Activated CD8-positive, alpha-beta T cell treated with anti-CD3 and anti-CD28 coated beads for 36 hours (primary cell): ENCODE measurements at regions of chr12 and their contacts with region 1.

Region 1: DNA sequence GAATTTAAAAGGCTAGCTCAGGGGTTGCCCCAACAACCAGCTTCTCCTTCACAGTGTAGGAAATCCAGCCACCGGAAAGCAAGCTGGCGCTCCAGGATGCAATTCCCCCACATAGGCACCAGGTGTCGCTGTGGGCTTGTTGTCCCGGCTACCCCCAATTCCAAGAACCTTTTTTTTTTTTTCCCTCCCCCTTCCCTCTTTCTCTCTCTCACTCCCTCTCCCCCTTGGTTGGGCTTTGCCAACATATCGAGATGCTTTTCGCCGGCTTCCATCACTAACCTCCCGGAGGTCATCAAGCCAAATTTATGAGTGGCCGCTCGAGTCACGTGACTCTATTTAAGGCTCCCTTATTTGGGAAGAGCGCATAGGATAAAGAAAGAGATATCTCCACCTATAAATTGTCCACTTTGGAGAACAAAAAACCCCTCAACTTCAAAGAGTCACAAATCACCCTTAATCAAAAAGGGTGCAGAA is at the start of gene HOXC5:
- DNase-seq: peak; percentile 78
- ATAC-seq: peak; percentile 57
- H3K4me3 Mint-ChIP-seq: peak within 1 kb of the TSS; percentile 32
- H3K27ac Mint-ChIP-seq: no peak within 1 kb of the TSS
- H3K4me1 Mint-ChIP-seq: peaks cover 18% of the 10 kb centered on the region
- H3K27me3 Mint-ChIP-seq: peaks cover 66% of the 10 kb centered on the region
- CTCF ChIP-seq: peak; percentile 97
- total RNA-seq, gene HOXC5: not detected

Region 2: GRCh38 chr12:53939141-53940108 is 93.2 kb before region 1 on chr12:
- CTCF ChIA-PET with region 1: no interaction called
- POLR2A ChIA-PET with region 1: no interaction called
- intact Hi-C with region 1: no loop called
- DNase-seq: no peak
- ATAC-seq: no peak
- H3K4me3 Mint-ChIP-seq: no peak overlapping the region
- H3K27ac Mint-ChIP-seq: no peak overlapping the region
- H3K4me1 Mint-ChIP-seq: peaks cover 4% of the 10 kb centered on the region
- H3K27me3 Mint-ChIP-seq: peaks cover 79% of the 10 kb centered on the region
- CTCF ChIP-seq: no peak

Region 3: DNA sequence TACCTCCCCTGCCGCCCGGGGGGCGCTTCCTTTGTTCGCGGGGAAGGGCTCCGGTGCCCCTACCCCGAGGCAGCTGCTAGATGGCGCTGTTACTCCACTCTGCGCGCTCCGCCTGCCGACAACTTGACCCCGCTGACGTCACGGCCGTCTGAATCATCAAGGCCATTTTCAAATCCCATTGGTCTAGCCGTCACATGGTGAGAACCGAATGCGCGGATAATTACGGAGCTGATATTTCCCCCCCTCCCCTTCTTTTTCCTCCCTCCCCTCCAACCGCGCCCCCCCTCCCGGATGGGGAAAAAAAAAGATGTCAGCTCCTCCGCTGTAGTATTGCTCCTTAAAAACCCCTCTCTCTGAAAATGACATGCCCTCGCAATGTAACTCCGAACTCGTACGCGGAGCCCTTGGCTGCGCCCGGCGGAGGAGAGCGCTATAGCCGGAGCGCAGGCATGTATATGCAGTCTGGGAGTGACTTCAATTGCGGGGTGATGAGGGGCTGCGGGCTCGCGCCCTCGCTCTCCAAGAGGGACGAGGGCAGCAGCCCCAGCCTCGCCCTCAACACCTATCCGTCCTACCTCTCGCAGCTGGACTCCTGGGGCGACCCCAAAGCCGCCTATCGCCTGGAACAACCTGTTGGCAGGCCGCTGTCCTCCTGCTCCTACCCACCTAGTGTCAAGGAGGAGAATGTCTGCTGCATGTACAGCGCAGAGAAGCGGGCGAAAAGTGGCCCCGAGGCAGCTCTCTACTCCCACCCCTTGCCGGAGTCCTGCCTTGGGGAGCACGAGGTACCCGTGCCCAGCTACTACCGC is 47.6 kb before region 1 on chr12 and contains the start of gene HOXC10:
- CTCF ChIA-PET with region 1: interaction called, 32 read pairs
- POLR2A ChIA-PET with region 1: no interaction called
- intact Hi-C with region 1: loop called (anchors 5 kb)
- DNase-seq: peak; percentile 97
- ATAC-seq: peak; percentile 83
- H3K4me3 Mint-ChIP-seq: peak within 1 kb of the TSS; percentile 38
- H3K27ac Mint-ChIP-seq: no peak within 1 kb of the TSS
- H3K4me1 Mint-ChIP-seq: peaks cover 27% of the 10 kb centered on the region
- H3K27me3 Mint-ChIP-seq: peaks cover 90% of the 10 kb centered on the region
- CTCF ChIP-seq: peak; percentile 62
- total RNA-seq, gene HOXC10: not detected

Region 4: GRCh38 chr12:54012631-54013409 is 19.8 kb before region 1 on chr12:
- CTCF ChIA-PET with region 1: interaction called, 37 read pairs
- POLR2A ChIA-PET with region 1: no interaction called
- intact Hi-C with region 1: no loop called
- DNase-seq: no peak
- ATAC-seq: no peak
- H3K4me3 Mint-ChIP-seq: no peak overlapping the region
- H3K27ac Mint-ChIP-seq: no peak overlapping the region
- H3K4me1 Mint-ChIP-seq: peaks cover 30% of the 10 kb centered on the region
- H3K27me3 Mint-ChIP-seq: peaks cover 84% of the 10 kb centered on the region
- CTCF ChIP-seq: no peak

Region 5: GRCh38 chr12:54053751-54054741 is 21.4 kb after region 1 on chr12 and contains the start of gene HOXC4:
- CTCF ChIA-PET with region 1: interaction called, 31 read pairs
- POLR2A ChIA-PET with region 1: interaction called, 3 read pairs
- intact Hi-C with region 1: no loop called
- DNase-seq: peak; percentile 48
- ATAC-seq: peak; percentile 72
- H3K4me3 Mint-ChIP-seq: peak within 1 kb of the TSS; percentile 73
- H3K27ac Mint-ChIP-seq: peak within 1 kb of the TSS; percentile 82
- H3K4me1 Mint-ChIP-seq: peaks cover 30% of the 10 kb centered on the region
- H3K27me3 Mint-ChIP-seq: peaks cover 62% of the 10 kb centered on the region
- CTCF ChIP-seq: no peak
- total RNA-seq, gene HOXC4: 0.89 to 1.2 TPM

Region 6: GRCh38 chr12:54173066-54173726 is 140.5 kb after region 1 on chr12:
- CTCF ChIA-PET with region 1: interaction called, 19 read pairs
- POLR2A ChIA-PET with region 1: no interaction called
- intact Hi-C with region 1: no loop called
- DNase-seq: peak; percentile 51
- ATAC-seq: peak; percentile 76
- H3K4me3 Mint-ChIP-seq: no peak overlapping the region
- H3K27ac Mint-ChIP-seq: no peak overlapping the region
- H3K4me1 Mint-ChIP-seq: no peaks in the 10 kb centered on the region
- H3K27me3 Mint-ChIP-seq: peaks cover 4% of the 10 kb centered on the region
- CTCF ChIP-seq: no peak

Region 7: DNA sequence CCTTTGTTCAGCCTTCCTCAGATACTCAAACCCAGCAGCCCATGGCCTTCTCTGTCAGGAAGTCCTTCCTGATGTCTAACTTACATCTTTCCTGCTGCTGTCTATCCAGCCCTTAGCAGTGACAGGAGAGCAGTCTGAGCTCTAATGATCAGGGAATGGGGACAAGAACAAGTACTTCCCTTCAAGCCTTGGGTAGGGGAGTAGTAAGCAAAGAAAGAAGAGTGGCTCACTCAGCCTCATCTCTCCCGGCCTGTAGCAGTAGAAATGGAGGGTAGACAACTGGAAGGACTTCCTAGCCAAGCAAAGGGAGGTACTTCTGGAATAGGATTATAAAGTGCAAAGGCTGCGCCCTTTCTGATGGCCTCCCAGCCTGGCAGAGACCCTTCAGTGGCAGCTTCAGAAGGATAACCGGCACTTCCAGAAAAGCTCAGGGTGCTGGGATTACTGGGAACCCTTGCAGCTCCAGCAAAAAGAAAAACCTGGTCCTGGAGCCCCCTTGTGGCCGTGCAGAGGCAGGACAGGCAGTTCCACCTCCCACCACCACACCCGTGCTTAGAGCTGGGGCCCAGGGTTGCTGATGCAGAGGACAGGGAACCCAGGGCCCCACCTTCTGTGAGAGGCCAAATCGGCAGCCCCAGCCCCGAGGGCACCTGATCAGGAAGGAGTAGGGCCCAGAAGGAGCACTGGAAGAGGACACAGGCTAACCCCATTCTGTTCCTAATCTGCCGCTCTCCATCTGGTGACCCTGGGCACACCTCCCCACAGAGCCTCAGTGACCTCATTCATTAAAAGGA is 168.5 kb after region 1 on chr12:
- CTCF ChIA-PET with region 1: interaction called, 140 read pairs
- POLR2A ChIA-PET with region 1: no interaction called
- intact Hi-C with region 1: no loop called
- DNase-seq: peak; percentile 72
- ATAC-seq: peak; percentile 96
- H3K4me3 Mint-ChIP-seq: no peak overlapping the region
- H3K27ac Mint-ChIP-seq: no peak overlapping the region
- H3K4me1 Mint-ChIP-seq: no peaks in the 10 kb centered on the region
- H3K27me3 Mint-ChIP-seq: peaks cover 52% of the 10 kb centered on the region
- CTCF ChIP-seq: peak; percentile 94

Region 8: GRCh38 chr12:54214553-54215406 is 182.1 kb after region 1 on chr12:
- CTCF ChIA-PET with region 1: interaction called, 57 read pairs
- POLR2A ChIA-PET with region 1: no interaction called
- intact Hi-C with region 1: no loop called
- DNase-seq: peak; percentile 95
- ATAC-seq: peak; percentile 88
- H3K4me3 Mint-ChIP-seq: peak overlapping the region; percentile 76
- H3K27ac Mint-ChIP-seq: no peak overlapping the region
- H3K4me1 Mint-ChIP-seq: peaks cover 21% of the 10 kb centered on the region
- H3K27me3 Mint-ChIP-seq: peaks cover 20% of the 10 kb centered on the region
- CTCF ChIP-seq: peak; percentile 100